PC-9 (cell line): ENCODE measurements at regions of chr1 and their contacts with region 1.

Region 1: GRCh38 chr1:209565759-209566678 is 17.5 kb upstream of the CAMK1G start:
- DNase-seq: peak; percentile 53 to 65
- H3K4me3 ChIP-seq: no peak overlapping the region
- H3K27ac ChIP-seq: no peak overlapping the region
- H3K4me1 ChIP-seq: no peaks in the 10 kb centered on the region
- H3K27me3 ChIP-seq: peaks cover 7% of the 10 kb centered on the region; the same call in 1 of the 2 replicates
- CTCF ChIP-seq: peak; percentile 90

Region 2: DNA sequence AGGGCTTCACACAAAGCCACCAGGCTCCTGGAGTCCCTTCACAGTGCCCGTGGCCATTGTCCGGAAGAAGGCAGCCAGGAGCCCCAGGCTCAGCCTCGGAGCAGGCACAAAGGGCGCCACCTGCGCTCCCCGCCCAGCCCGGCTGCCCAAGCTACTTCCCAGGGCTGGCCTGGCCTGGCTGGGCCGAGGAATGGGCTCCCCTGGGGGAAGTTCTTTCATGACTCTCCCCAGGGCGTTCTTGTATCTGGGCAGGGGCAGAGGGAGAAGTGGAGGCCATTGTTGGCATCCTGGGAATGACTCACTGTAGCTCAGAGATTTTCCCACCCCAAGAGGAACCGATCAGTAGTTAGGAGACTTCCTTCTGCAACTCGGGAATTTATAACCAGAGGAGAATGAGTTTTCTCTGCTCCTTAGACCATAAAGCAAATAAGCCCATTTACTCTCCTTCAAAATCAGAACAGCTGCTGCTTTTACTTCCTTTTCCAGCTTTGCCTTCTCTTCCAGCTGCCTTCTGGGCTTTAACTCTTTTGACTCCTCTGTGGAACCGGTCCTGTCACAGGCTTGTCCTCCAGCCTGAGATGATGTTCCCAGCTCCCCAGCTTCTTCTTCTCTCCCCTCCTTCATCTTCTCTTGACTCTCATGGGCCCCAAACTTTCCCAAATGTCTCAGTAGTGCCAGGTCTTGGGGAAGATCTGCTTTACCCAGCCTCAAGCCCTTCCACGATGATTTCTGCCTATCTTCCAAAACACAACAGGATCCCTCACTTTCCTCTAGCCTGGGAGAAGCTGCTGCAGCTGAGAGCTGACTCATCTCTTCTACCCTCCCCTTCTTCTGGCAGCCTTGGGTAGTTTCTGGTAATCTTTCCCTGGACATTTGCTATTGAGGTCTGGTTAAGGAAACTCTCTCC is 1536.4 kb before region 1 on chr1:
- CTCF ChIA-PET with region 1: no interaction called
- POLR2A ChIA-PET with region 1: no interaction called
- intact Hi-C with region 1: loop called (anchors 10 kb)
- DNase-seq: peak in 1 of 2 experiments; percentile 27
- H3K4me3 ChIP-seq: no peak overlapping the region
- H3K27ac ChIP-seq: no peak overlapping the region
- H3K4me1 ChIP-seq: no peaks in the 10 kb centered on the region
- H3K27me3 ChIP-seq: no peaks in the 10 kb centered on the region
- CTCF ChIP-seq: no peak

Region 3: GRCh38 chr1:208652296-208653160 is 913.5 kb before region 1 on chr1:
- CTCF ChIA-PET with region 1: no interaction called
- POLR2A ChIA-PET with region 1: no interaction called
- intact Hi-C with region 1: loop called (anchors 5 kb)
- DNase-seq: peak in 1 of 2 experiments; percentile 37
- H3K4me3 ChIP-seq: no peak overlapping the region
- H3K27ac ChIP-seq: no peak overlapping the region
- H3K4me1 ChIP-seq: no peaks in the 10 kb centered on the region
- H3K27me3 ChIP-seq: peaks cover 8% of the 10 kb centered on the region; the same call in 1 of the 2 replicates
- CTCF ChIP-seq: peak; percentile 88

Region 4: DNA sequence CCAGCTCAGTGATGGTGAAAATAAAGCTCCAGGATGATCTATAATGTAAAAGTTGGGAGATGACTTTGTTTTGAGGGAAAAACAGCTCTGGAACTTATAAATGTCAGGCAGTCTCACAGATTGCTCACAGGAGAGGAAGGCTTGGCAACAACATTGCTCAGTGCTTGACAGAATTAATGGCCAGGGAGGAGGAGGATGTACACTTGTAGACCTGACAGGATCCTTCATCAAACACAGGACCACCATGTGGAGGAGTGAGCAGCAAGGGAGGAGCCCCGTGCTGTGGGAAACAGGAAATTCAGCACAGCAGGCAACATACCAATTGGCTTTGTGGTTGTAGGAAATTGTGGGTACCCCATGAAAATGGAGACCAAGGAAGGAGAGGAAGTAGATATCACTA is 274.3 kb before region 1 on chr1:
- CTCF ChIA-PET with region 1: no interaction called
- POLR2A ChIA-PET with region 1: no interaction called
- intact Hi-C with region 1: no loop called
- DNase-seq: no peak
- H3K4me3 ChIP-seq: no peak overlapping the region
- H3K27ac ChIP-seq: no peak overlapping the region
- H3K4me1 ChIP-seq: no peaks in the 10 kb centered on the region
- H3K27me3 ChIP-seq: no peaks in the 10 kb centered on the region
- CTCF ChIP-seq: no peak

Region 5: DNA sequence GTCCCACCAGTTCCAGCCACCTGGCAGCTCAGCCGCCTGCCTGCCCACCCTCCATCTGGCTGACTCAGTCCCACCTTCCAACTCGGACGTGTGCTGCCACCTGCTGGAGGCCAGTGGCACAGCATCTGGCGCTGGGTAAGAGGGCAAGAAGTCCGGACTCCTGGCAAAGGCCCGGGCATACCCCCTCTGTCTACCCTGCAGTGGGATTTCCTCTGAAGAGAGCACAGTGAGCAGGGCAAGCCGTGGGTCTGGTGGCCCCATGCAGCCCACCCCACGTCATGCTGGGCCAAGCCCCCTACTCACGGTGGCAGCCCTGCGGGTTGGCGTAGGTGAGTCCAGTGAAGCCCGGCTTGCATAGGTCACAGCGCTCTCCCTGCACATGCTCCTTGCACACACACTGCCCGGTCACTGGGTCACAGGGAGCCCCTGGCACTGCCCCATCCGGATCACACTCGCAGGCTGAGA is 61.7 kb after region 1 on chr1:
- CTCF ChIA-PET with region 1: no interaction called
- POLR2A ChIA-PET with region 1: no interaction called
- intact Hi-C with region 1: loop called (anchors 2 kb)
- DNase-seq: peak; percentile 45 to 53
- H3K4me3 ChIP-seq: no peak overlapping the region
- H3K27ac ChIP-seq: no peak overlapping the region
- H3K4me1 ChIP-seq: no peaks in the 10 kb centered on the region
- H3K27me3 ChIP-seq: no peaks in the 10 kb centered on the region
- CTCF ChIP-seq: peak; percentile 93

Region 6: GRCh38 chr1:209747580-209748262 is 181.7 kb after region 1 on chr1:
- CTCF ChIA-PET with region 1: no interaction called
- POLR2A ChIA-PET with region 1: no interaction called
- intact Hi-C with region 1: loop called (anchors 1 kb)
- DNase-seq: peak; percentile 95 to 97
- H3K4me3 ChIP-seq: no peak overlapping the region
- H3K27ac ChIP-seq: no peak overlapping the region
- H3K4me1 ChIP-seq: no peaks in the 10 kb centered on the region; the same call in 1 of the 2 replicates
- H3K27me3 ChIP-seq: no peaks in the 10 kb centered on the region
- CTCF ChIP-seq: peak; percentile 94